Activated naive CD4-positive, alpha-beta T cell treated with anti-CD3 and anti-CD28 coated beads for 36 hours (primary cell): ENCODE measurements at regions of chr4 and their contacts with region 1.

Region 1: GRCh38 chr4:184474263-184475095 is at the start of gene IRF2:
- DNase-seq: peak; percentile 99
- H3K4me3 Mint-ChIP-seq: peak within 1 kb of the TSS; percentile 98
- H3K27ac Mint-ChIP-seq: peak within 1 kb of the TSS; percentile 100
- H3K4me1 Mint-ChIP-seq: peaks cover 49% of the 10 kb centered on the region
- H3K27me3 Mint-ChIP-seq: no peaks in the 10 kb centered on the region
- total RNA-seq, gene IRF2: 37.3 to 38.3 TPM

Region 2: DNA sequence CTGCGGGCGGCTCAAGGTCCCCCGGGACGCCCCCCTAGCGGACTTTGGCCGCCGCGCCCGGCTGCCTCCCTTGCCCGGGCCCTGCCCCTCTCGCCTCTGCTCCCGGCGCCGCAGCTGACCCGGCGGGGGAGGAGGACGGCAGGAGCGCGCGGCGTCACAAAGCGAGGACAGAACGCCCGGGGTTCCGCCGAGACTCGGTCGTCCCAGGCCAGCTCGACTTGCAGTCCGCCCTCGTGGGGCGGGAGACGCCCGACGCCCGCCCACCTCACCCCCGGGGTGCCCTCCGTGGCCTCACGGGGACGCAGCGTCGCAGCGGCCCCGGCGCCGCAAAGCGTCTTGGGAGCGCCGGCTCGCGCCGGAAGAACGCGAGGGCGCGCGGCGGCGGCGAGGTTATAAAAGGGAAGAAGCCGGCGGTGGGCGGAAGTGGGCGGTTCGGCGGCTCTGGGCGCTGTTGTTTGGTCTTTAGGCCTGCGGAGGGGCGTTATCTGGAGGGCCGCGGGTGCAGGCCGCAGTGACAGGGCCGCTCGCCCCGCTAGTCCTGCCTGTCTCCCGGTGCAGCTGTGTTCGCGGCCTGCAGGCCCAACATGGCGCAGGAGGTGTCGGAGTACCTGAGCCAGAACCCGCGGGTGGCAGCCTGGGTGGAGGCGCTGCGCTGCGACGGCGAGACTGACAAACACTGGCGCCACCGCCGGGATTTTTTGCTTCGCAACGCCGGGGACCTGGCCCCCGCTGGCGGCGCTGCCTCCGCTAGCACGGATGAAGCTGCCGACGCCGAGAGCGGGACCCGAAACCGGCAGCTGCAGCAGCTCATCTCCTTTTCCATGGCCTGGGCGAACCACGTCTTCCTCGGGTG is 1030.0 kb before region 1 on chr4 and contains the start of gene CDKN2AIP:
- CTCF ChIA-PET with region 1: no interaction called
- intact Hi-C with region 1: loop called (anchors 10 kb)
- DNase-seq: peak; percentile 92
- H3K4me3 Mint-ChIP-seq: peak within 1 kb of the TSS; percentile 99
- H3K27ac Mint-ChIP-seq: peak within 1 kb of the TSS; percentile 98
- H3K4me1 Mint-ChIP-seq: peaks cover 41% of the 10 kb centered on the region
- H3K27me3 Mint-ChIP-seq: no peaks in the 10 kb centered on the region
- total RNA-seq, gene CDKN2AIP: 26.5 to 26.7 TPM

Region 3: GRCh38 chr4:184287697-184288255 is 186.7 kb before region 1 on chr4:
- CTCF ChIA-PET with region 1: interaction called, 6 read pairs
- intact Hi-C with region 1: loop called (anchors 1 kb)
- DNase-seq: no peak
- H3K4me3 Mint-ChIP-seq: no peak overlapping the region
- H3K27ac Mint-ChIP-seq: no peak overlapping the region
- H3K4me1 Mint-ChIP-seq: peaks cover 52% of the 10 kb centered on the region
- H3K27me3 Mint-ChIP-seq: peaks cover 4% of the 10 kb centered on the region

Region 4: GRCh38 chr4:184408021-184408710 is 66.3 kb before region 1 on chr4:
- CTCF ChIA-PET with region 1: no interaction called
- intact Hi-C with region 1: loop called (anchors 2 kb)
- DNase-seq: no peak
- H3K4me3 Mint-ChIP-seq: no peak overlapping the region
- H3K27ac Mint-ChIP-seq: no peak overlapping the region
- H3K4me1 Mint-ChIP-seq: peaks cover 46% of the 10 kb centered on the region
- H3K27me3 Mint-ChIP-seq: no peaks in the 10 kb centered on the region

Region 5: DNA sequence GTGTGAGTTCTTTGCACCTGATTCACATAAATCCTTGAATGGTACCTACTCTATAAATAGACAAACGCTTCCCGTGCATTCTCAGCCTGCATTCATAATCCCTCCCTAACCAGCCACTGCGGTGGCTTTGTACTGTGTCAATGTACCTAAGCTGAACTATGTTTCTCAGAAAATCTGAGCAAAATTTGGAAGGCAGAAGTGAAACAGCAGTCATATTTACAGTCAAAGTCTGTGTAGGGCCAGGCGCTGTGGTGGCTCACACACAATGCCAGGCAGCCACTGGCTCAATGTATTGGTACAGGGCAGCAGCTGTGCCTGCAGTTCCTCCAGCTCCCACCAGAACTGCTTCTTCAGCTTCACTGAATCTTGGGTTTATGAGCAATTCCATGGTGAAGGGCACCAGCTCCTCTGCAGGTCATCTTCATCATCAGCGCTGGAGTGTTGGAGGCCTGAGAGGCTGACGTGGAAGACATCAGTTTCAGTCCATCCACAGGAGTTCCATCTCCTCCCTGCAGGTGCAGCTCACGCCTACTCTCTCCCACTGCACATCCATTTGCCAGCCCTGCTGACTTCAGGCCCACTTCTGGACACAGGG is 32.1 kb after region 1 on chr4:
- CTCF ChIA-PET with region 1: interaction called, 8 read pairs
- intact Hi-C with region 1: loop called (anchors 1 kb)
- DNase-seq: peak; percentile 66
- H3K4me3 Mint-ChIP-seq: no peak overlapping the region
- H3K27ac Mint-ChIP-seq: no peak overlapping the region
- H3K4me1 Mint-ChIP-seq: peaks cover 33% of the 10 kb centered on the region
- H3K27me3 Mint-ChIP-seq: no peaks in the 10 kb centered on the region

Region 6: DNA sequence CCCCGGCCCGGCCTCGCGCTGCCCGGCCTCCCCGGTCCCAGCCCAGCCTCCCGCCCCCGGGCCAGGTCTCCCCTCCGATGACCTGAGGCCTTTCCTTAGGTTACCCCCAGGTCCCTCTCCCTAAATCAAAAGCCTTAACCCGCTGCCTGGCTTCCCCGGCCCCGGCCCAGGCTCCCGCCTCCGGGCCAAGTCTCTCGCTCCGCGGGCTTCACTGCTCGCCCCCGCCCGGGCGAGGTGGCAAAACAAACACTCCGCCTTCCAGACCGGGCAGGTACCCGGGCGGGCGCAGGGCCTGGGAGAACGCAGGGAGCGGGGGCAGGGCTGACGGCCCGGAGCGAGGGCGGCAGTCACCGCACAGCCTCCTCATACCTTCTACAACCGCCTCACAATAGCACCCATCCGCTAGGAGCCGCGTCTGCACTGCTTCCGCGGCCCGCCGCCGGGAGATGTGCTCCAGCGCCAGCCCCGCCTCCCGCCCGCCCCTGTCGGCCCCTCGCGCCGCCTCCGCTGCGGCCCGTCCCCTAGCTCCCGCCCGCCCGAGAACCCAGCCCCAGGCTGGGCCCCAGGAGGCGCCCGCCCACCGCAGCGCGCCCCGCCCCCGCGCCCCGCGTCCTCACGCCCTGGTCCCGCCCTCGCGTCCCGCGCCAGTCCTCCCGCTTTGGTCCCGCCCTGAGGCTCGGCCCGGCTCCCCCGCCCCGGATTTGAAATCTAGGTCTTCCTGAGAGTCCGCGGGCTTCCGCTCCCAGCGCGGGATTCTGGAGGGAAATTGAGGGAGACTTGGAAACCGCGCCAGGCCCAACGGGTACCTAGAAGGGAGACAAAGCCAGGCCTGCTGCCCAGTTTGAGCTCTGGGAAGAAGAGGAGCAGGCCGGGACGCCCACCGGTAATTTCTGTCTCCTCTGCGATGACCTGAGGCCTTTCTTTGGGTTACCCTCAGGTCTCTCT is 174.8 kb after region 1 on chr4 and contains the starts of genes CASP3 and PRIMPOL:
- CTCF ChIA-PET with region 1: no interaction called
- intact Hi-C with region 1: loop called (anchors 1 kb)
- DNase-seq: peak; percentile 97
- H3K4me3 Mint-ChIP-seq: peak within 1 kb of the TSS; percentile 93
- H3K27ac Mint-ChIP-seq: peak within 1 kb of the TSS; percentile 90
- H3K4me1 Mint-ChIP-seq: peaks cover 50% of the 10 kb centered on the region
- H3K27me3 Mint-ChIP-seq: no peaks in the 10 kb centered on the region
- total RNA-seq, gene CASP3: 27.5 to 27.9 TPM
- total RNA-seq, gene PRIMPOL: 17.9 to 18.1 TPM